ENCODE measurements at regions of chr14 and their contacts with region 1.

Region 1: DNA sequence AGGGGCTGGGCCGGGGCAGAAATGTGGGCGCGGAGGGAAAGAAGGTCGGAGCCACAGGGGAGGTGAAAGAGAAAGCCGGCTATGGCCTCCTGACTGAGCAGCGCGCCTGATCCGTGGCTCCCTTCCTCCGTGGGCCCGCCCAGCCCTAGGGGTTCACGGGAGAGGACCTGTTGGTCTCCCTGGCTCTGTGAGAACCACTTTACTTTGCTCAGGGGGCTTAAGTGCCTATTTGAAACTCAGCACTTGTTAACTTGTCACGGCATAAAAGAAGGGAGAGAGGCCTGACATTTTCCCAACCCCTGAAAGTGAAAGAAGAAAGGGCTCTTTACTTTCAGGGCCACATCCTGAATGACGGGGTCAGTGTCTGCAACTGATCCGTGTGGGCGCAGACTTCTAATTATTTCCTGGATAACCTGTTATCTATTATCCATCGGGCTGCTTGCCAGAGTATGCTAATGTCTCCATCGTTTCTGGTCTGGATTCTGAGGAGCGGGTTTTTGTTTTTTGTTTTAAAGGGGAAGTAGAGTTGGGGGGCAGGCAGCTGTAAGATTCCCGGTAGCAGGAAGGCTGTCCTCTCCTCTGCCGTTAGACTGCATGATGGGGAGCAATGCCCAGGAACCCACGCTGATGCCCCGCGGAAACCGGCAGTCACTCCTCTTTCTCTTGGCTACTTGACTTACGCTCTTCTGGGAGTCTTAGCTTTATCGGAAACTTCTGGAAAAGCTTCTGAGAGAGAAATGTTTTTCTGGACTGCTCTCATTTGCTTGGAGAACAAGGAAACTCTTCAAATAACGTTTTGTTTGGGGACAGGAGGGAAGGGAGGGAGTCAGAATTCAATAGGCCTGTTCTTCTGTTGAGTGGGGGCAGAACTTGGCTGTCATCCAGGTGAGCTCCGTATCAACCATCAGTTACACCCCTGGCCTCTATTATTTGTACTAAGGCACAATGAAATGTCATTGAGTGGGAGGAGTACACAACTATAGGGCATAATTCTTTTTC is 127.7 kb upstream of the MAX start:
- DNase-seq: peak; percentile 49 to 78
- ATAC-seq: peak; percentile 70 to 95 (median 90)
- H3K4me3 ChIP-seq: peak overlapping the region in 9 of 10 donors; percentile 11 to 52 (median 45)
- H3K27ac ChIP-seq: peak overlapping the region; percentile 51 to 95 (median 86)
- H3K4me1 ChIP-seq: peaks cover 0 to 47% (median 11%) of the 10 kb centered on the region in 9 donors
- H3K27me3 ChIP-seq: no peaks in the 10 kb centered on the region
- CTCF ChIP-seq: no peak

Region 2: GRCh38 chr14:65336191-65336591 is 106.1 kb after region 1 on chr14:
- intact Hi-C with region 1: loop called in 1 of 10 experiments (anchors 10 kb)
- DNase-seq: no peak
- ATAC-seq: no peak
- H3K4me3 ChIP-seq: no peak overlapping the region
- H3K27ac ChIP-seq: no peak overlapping the region
- H3K4me1 ChIP-seq: peaks cover 0 to 45% (median 20%) of the 10 kb centered on the region in 9 donors
- H3K27me3 ChIP-seq: no peaks in the 10 kb centered on the region
- CTCF ChIP-seq: no peak